ENCODE measurements at regions of chr6 and their contacts with region 1.

Region 1: GRCh38 chr6:102995491-102995890 is 1602.0 kb downstream of the GRIK2 start:
- DNase-seq: no peak
- ATAC-seq: no peak

Region 2: DNA sequence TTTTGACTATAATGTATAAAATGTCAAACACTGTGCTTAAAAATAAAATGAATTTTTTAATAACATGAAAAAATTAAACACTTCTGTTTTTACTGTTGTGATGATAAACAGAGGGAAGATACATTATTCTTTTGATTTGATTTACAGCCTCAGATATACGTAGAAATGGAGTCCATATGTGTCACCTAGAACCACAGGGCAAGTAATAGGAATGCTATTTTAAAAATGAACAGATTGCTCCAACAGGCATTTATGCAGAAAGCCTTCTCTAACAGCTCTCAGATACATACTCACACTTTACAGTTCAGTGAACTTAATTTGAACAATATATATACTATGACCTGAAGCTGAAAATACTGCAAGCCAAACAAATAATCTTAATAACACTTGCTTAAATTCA is 51.0 kb before region 1 on chr6:
- intact Hi-C with region 1: no loop called
- DNase-seq: no peak
- ATAC-seq: no peak

Region 3: GRCh38 chr6:103047567-103047966 is 52.1 kb after region 1 on chr6:
- intact Hi-C with region 1: loop called (anchors 10 kb)
- DNase-seq: no peak
- ATAC-seq: no peak